ENCODE measurements at regions of chr9 and their contacts with region 1.

Region 1: DNA sequence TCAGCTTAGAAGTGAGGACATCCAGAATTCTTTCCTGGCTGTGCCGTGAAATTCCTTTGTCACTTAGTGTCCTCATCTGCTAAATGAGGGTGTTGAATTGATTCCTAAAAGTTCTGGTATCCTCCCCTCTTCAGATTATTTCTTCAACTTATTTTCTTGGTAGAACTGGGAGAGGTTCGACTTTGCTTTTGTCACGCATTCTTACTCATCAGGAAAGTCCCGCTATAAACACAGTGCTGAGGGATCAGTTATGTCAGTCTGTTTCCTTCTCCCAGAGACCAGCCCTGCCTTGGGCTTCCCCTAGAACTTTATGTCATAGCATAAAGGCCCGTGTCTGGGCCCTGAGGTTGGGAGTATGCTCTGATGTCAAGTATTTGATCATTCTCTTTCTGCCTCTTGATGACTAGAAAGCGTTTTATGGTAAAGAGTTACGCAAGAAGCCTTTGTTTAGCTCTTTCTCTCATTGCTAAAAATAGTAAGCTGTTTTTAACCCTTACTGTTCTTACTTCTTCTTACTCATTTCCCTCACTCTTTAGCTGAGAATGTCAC is 29.6 kb downstream of the MTAP start:
- DNase-seq: peak; percentile 59
- ATAC-seq: peak; percentile 12
- H3K4me3 ChIP-seq: no peak overlapping the region
- H3K27ac ChIP-seq: peak overlapping the region; percentile 100
- H3K4me1 ChIP-seq: peaks cover 65% of the 10 kb centered on the region
- H3K27me3 ChIP-seq: no peaks in the 10 kb centered on the region
- CTCF ChIP-seq: no peak

Region 2: DNA sequence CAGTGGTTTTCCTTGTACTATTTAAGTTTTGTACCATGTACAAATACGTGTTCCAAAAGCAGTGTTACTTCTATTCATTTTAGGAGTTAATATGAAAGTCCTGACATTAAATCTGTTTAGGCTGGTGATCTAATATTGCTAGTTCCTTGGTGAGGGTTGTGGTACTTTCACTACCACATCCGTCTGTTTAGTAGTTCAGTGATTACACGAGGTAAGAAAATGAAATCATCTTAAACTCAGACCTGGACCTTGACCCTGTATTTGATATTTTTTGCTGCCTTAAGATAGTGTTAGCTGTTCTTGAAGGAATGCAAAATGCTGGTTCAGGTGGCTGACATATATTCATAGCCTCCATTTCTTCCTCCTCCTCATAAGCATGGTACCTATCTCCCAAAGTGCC is 20.7 kb after region 1 on chr9:
- CTCF ChIA-PET with region 1: no interaction called
- POLR2A ChIA-PET with region 1: no interaction called
- intact Hi-C with region 1: loop called (anchors 1 kb)
- DNase-seq: no peak
- ATAC-seq: no peak
- H3K4me3 ChIP-seq: no peak overlapping the region
- H3K27ac ChIP-seq: no peak overlapping the region
- H3K4me1 ChIP-seq: peaks cover 36% of the 10 kb centered on the region
- H3K27me3 ChIP-seq: no peaks in the 10 kb centered on the region
- CTCF ChIP-seq: no peak

Region 3: GRCh38 chr9:21995177-21996086 is 163.4 kb after region 1 on chr9:
- CTCF ChIA-PET with region 1: no interaction called
- POLR2A ChIA-PET with region 1: no interaction called
- intact Hi-C with region 1: loop called (anchors 5 kb)
- DNase-seq: peak; percentile 63
- ATAC-seq: peak; percentile 53
- H3K4me3 ChIP-seq: peak overlapping the region; percentile 96
- H3K27ac ChIP-seq: peak overlapping the region; percentile 78
- H3K4me1 ChIP-seq: peaks cover 31% of the 10 kb centered on the region
- H3K27me3 ChIP-seq: no peaks in the 10 kb centered on the region
- CTCF ChIP-seq: peak; percentile 36; the same call in 1 of the 2 replicates

Measured in PC-3 (cell line).